Activated B cell treated with CpG ODN at 0.5 μM for 24 hours (primary cell): ENCODE measurements at regions of chr14 and their contacts with region 1.

Region 1: GRCh38 chr14:104826189-104826860 is 25.4 kb downstream of the ZBTB42 start:
- DNase-seq: peak; percentile 97
- ATAC-seq: peak; percentile 87
- H3K4me3 Mint-ChIP-seq: peak overlapping the region; percentile 77
- H3K27ac Mint-ChIP-seq: no peak overlapping the region
- H3K4me1 Mint-ChIP-seq: peaks cover 20% of the 10 kb centered on the region
- H3K27me3 Mint-ChIP-seq: peaks cover 9% of the 10 kb centered on the region
- CTCF ChIP-seq: no peak

Region 2: GRCh38 chr14:104723648-104724406 is 102.5 kb before region 1 on chr14 and contains the start of gene ADSS1:
- CTCF ChIA-PET with region 1: no interaction called
- POLR2A ChIA-PET with region 1: no interaction called
- intact Hi-C with region 1: loop called (anchors 1 kb)
- DNase-seq: peak; percentile 68
- ATAC-seq: peak; percentile 83
- H3K4me3 Mint-ChIP-seq: peak within 1 kb of the TSS; percentile 78
- H3K27ac Mint-ChIP-seq: no peak within 1 kb of the TSS
- H3K4me1 Mint-ChIP-seq: no peaks in the 10 kb centered on the region
- H3K27me3 Mint-ChIP-seq: peaks cover 5% of the 10 kb centered on the region
- CTCF ChIP-seq: peak; percentile 94
- total RNA-seq, gene ADSS1: 0.18 and 0.39 TPM in 2 replicates

Region 3: GRCh38 chr14:104800015-104800770 is 26.1 kb before region 1 on chr14:
- CTCF ChIA-PET with region 1: interaction called, 4 read pairs
- POLR2A ChIA-PET with region 1: interaction called, 5 read pairs
- intact Hi-C with region 1: loop called (anchors 2 kb)
- DNase-seq: peak; percentile 78
- ATAC-seq: peak; percentile 76
- H3K4me3 Mint-ChIP-seq: peak overlapping the region; percentile 73
- H3K27ac Mint-ChIP-seq: peak overlapping the region; percentile 87
- H3K4me1 Mint-ChIP-seq: peaks cover 47% of the 10 kb centered on the region
- H3K27me3 Mint-ChIP-seq: no peaks in the 10 kb centered on the region
- CTCF ChIP-seq: no peak

Region 4: GRCh38 chr14:105020815-105021655 is 194.7 kb after region 1 on chr14 and contains the start of gene CDCA4:
- CTCF ChIA-PET with region 1: no interaction called
- POLR2A ChIA-PET with region 1: interaction called, 3 read pairs
- intact Hi-C with region 1: loop called (anchors 2 kb)
- DNase-seq: peak; percentile 97
- ATAC-seq: peak; percentile 84
- H3K4me3 Mint-ChIP-seq: peak within 1 kb of the TSS; percentile 92
- H3K27ac Mint-ChIP-seq: peak within 1 kb of the TSS; percentile 94
- H3K4me1 Mint-ChIP-seq: peaks cover 62% of the 10 kb centered on the region
- H3K27me3 Mint-ChIP-seq: no peaks in the 10 kb centered on the region
- CTCF ChIP-seq: no peak
- total RNA-seq, gene CDCA4: 11.7 and 13.6 TPM in 2 replicates